Lower leg skin (tissue), 4 donors: ENCODE measurements at regions of chr5 and their contacts with region 1.

Region 1: GRCh38 chr5:132500931-132501630 is 10.5 kb upstream of the IRF1 start:
- DNase-seq: peak in 1 of 2 donors; percentile 90
- H3K4me3 ChIP-seq: no peak overlapping the region
- CTCF ChIP-seq: peak in 1 of 3 donors; percentile 91
- POLR2A ChIP-seq: no peak

Region 2: GRCh38 chr5:131096774-131097710 is 1404.0 kb before region 1 on chr5:
- intact Hi-C with region 1: no loop called
- DNase-seq: no peak
- H3K4me3 ChIP-seq: no peak overlapping the region
- CTCF ChIP-seq: no peak
- POLR2A ChIP-seq: no peak

Region 3: DNA sequence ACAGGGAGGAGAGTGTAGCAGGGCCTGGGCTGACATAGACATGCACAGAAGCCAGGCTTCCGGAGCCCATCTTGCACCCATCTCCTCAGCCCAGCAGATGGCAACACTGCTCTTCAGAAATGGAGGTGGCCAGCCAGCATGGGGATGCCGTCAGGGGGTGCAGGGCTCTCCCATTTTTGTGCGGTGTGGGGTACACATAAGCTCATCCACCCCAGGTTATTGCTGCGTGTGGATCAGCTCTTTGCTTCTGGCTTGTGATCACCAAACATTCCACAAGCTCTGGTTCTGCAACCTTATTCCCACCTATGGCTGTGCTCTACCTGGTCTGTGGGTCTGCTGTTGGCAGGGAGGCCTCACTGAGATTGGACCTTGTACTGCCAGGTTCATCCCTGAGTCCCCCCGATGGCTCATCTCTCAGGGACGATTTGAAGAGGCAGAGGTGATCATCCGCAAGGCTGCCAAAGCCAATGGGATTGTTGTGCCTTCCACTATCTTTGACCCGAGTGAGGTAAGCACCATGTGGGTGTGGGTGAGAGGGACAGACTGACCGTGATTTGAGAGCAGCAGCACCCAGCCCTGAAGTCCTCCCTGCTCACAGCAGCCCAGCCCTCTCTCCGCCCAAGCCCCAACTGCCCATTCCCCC is 114.3 kb before region 1 on chr5:
- intact Hi-C with region 1: loop called (anchors 2 kb)
- DNase-seq: peak; percentile 74 to 93
- H3K4me3 ChIP-seq: no peak overlapping the region
- CTCF ChIP-seq: peak in 1 of 3 donors; percentile 55
- POLR2A ChIP-seq: no peak